ENCODE measurements at regions of chr2 and their contacts with region 1.

Region 1: GRCh38 chr2:206765242-206766056 is at the starts of genes FASTKD2 and MDH1B:
- DNase-seq: peak; percentile 91
- ATAC-seq: peak; percentile 91
- H3K4me3 Mint-ChIP-seq: peak within 1 kb of the TSS; percentile 91
- H3K27ac Mint-ChIP-seq: peak within 1 kb of the TSS; percentile 96
- H3K4me1 Mint-ChIP-seq: peaks cover 34% of the 10 kb centered on the region
- H3K27me3 Mint-ChIP-seq: peaks cover 2% of the 10 kb centered on the region
- total RNA-seq, gene FASTKD2: 18.8 to 23.9 TPM
- total RNA-seq, gene MDH1B: 0.23 to 0.32 TPM

Region 2: DNA sequence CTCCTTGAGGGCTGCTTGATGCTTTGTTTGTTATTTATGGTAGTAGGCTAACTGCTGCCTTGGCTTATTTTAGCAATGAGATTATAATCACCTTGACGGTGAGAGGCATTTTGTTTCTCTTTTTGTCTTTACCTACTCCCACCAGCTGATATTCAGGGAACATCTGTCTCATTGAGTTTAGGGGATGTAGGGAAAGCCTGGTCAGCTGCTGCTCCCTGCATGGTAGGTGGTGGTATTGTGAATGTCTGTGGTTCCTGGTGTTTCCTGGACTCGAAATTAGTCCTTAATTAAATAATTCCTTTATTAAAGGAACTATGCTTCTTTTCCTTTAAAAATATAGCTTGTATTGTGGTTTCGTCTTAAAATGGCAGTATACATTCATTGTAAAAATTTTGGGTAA is 244.3 kb before region 1 on chr2:
- CTCF ChIA-PET with region 1: no interaction called
- DNase-seq: no peak
- ATAC-seq: no peak
- H3K4me3 Mint-ChIP-seq: no peak overlapping the region
- H3K27ac Mint-ChIP-seq: no peak overlapping the region
- H3K4me1 Mint-ChIP-seq: peaks cover 3% of the 10 kb centered on the region
- H3K27me3 Mint-ChIP-seq: peaks cover 2% of the 10 kb centered on the region

Region 3: GRCh38 chr2:206783718-206784117 is 18.3 kb after region 1 on chr2:
- CTCF ChIA-PET with region 1: interaction called, 12 read pairs
- DNase-seq: no peak
- ATAC-seq: no peak
- H3K4me3 Mint-ChIP-seq: no peak overlapping the region
- H3K27ac Mint-ChIP-seq: no peak overlapping the region
- H3K4me1 Mint-ChIP-seq: peaks cover 3% of the 10 kb centered on the region
- H3K27me3 Mint-ChIP-seq: no peaks in the 10 kb centered on the region